Activated CD4-positive, alpha-beta memory T cell treated with anti-CD3 and anti-CD28 coated beads for 36 hours (primary cell): ENCODE measurements at regions of chr13 and their contacts with region 1.

Region 1: DNA sequence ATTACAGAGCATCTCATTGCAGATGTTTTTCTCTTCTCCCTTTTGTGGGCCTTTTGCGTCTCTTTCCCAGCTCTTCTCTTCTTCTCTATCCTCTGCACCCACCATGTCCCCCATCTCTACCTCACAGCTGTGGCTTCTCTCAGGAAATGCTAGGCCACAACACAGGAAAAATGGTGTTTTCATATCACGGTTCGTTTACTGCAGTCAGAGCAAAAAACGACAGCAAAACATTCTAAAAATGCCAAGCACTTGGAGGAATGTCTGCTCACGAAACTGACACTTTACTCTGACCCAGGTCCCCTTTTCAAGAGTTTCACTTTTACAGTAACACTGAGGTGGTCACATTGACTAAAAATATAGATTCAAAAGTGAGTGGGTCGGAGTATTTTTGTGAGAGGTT is 152.2 kb downstream of the DCT start:
- DNase-seq: no peak
- H3K4me3 Mint-ChIP-seq: no peak overlapping the region
- H3K27ac Mint-ChIP-seq: peak overlapping the region; percentile 50
- H3K4me1 Mint-ChIP-seq: peaks cover 75% of the 10 kb centered on the region
- H3K27me3 Mint-ChIP-seq: peaks cover 13% of the 10 kb centered on the region

Region 2: GRCh38 chr13:93794197-93794885 is 533.0 kb before region 1 on chr13:
- CTCF ChIA-PET with region 1: no interaction called
- POLR2A ChIA-PET with region 1: no interaction called
- intact Hi-C with region 1: loop called (anchors 1 kb)
- DNase-seq: peak; percentile 80
- H3K4me3 Mint-ChIP-seq: no peak overlapping the region
- H3K27ac Mint-ChIP-seq: no peak overlapping the region
- H3K4me1 Mint-ChIP-seq: peaks cover 7% of the 10 kb centered on the region
- H3K27me3 Mint-ChIP-seq: peaks cover 16% of the 10 kb centered on the region

Region 3: GRCh38 chr13:94239135-94239534 is 88.2 kb before region 1 on chr13:
- CTCF ChIA-PET with region 1: no interaction called
- POLR2A ChIA-PET with region 1: no interaction called
- intact Hi-C with region 1: loop called (anchors 5 kb)
- DNase-seq: no peak
- H3K4me3 Mint-ChIP-seq: no peak overlapping the region
- H3K27ac Mint-ChIP-seq: no peak overlapping the region
- H3K4me1 Mint-ChIP-seq: peaks cover 36% of the 10 kb centered on the region
- H3K27me3 Mint-ChIP-seq: no peaks in the 10 kb centered on the region

Region 4: DNA sequence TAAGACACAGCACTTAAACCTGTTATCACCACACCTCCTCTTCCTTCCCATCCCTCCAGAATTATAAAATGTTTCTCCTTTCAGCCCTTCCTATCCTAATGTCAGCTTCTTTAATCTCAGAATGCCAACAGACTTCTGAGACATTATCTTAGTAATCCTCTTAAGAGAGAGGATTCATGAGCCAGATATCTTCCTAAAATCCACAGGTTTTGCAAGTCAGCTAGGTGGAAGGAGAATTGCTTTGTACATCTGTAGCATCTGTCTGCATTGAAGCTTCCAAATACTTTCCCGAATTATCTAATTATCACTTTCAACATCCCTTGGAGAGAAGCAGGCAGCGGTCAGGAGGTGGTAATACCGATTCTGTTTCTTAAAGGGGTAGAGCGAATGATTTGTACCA is 26.9 kb before region 1 on chr13:
- CTCF ChIA-PET with region 1: no interaction called
- POLR2A ChIA-PET with region 1: no interaction called
- intact Hi-C with region 1: no loop called
- DNase-seq: no peak
- H3K4me3 Mint-ChIP-seq: no peak overlapping the region
- H3K27ac Mint-ChIP-seq: no peak overlapping the region
- H3K4me1 Mint-ChIP-seq: no peaks in the 10 kb centered on the region
- H3K27me3 Mint-ChIP-seq: no peaks in the 10 kb centered on the region

Region 5: GRCh38 chr13:94317063-94317491 is 10.2 kb before region 1 on chr13:
- CTCF ChIA-PET with region 1: no interaction called
- POLR2A ChIA-PET with region 1: no interaction called
- intact Hi-C with region 1: loop called (anchors 1 kb)
- DNase-seq: no peak
- H3K4me3 Mint-ChIP-seq: no peak overlapping the region
- H3K27ac Mint-ChIP-seq: no peak overlapping the region
- H3K4me1 Mint-ChIP-seq: peaks cover 9% of the 10 kb centered on the region
- H3K27me3 Mint-ChIP-seq: no peaks in the 10 kb centered on the region

Region 6: DNA sequence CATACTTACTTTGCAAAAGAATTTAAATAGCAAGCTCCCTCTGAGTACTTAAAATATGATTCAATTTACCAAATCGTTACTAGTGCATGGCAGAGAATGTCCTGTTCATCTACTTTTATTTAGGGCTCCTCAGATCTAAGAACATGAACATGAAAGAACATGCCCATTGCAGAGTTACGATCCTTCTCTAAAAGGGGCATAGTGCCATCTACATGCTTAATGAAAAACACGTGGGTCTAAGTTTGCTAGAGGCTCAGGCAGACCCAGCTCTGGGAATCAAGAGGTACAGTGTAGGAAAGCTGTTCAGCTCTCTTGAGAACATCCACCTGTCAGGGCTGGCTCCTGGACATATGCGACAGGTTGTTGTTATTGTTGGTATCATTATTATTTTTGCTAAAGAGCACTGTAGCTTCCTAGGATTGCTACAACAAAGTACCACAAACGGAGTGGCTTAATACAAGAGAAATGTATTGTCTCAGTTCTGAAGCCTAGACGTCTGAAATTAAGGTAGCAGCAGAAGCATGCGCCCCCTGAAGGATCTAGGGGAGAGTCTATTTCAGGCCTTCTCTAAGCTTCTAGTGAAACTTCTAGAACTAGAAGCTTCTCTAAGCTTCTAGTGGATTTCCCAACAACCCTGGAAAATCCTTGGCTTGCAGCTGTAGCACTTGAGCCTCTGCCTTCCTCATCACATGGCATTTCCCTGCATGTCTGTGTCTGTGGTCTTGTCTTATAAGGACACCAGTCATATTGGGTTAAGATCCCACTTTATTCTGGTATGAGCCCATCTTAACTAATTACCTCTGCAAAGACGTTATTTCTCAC is 18.3 kb after region 1 on chr13:
- CTCF ChIA-PET with region 1: no interaction called
- POLR2A ChIA-PET with region 1: interaction called, 3 read pairs
- intact Hi-C with region 1: loop called (anchors 1 kb)
- DNase-seq: no peak
- H3K4me3 Mint-ChIP-seq: no peak overlapping the region
- H3K27ac Mint-ChIP-seq: no peak overlapping the region
- H3K4me1 Mint-ChIP-seq: peaks cover 17% of the 10 kb centered on the region
- H3K27me3 Mint-ChIP-seq: peaks cover 2% of the 10 kb centered on the region

Region 7: GRCh38 chr13:94549232-94550061 is 222.1 kb after region 1 on chr13:
- CTCF ChIA-PET with region 1: no interaction called
- POLR2A ChIA-PET with region 1: no interaction called
- intact Hi-C with region 1: loop called (anchors 10 kb)
- DNase-seq: peak; percentile 93
- H3K4me3 Mint-ChIP-seq: peak overlapping the region; percentile 88
- H3K27ac Mint-ChIP-seq: peak overlapping the region; percentile 94
- H3K4me1 Mint-ChIP-seq: peaks cover 11% of the 10 kb centered on the region
- H3K27me3 Mint-ChIP-seq: peaks cover 2% of the 10 kb centered on the region

Region 8: GRCh38 chr13:94601446-94602431 is 274.4 kb after region 1 on chr13 and contains the start of gene GPR180:
- CTCF ChIA-PET with region 1: no interaction called
- POLR2A ChIA-PET with region 1: no interaction called
- intact Hi-C with region 1: loop called (anchors 10 kb)
- DNase-seq: peak; percentile 95
- H3K4me3 Mint-ChIP-seq: peak within 1 kb of the TSS; percentile 88
- H3K27ac Mint-ChIP-seq: peak within 1 kb of the TSS; percentile 87
- H3K4me1 Mint-ChIP-seq: peaks cover 29% of the 10 kb centered on the region
- H3K27me3 Mint-ChIP-seq: no peaks in the 10 kb centered on the region
- total RNA-seq, gene GPR180: 9.1 to 9.7 TPM